ENCODE measurements at regions of chr5 and their contacts with region 1.

Region 1: GRCh38 chr5:112529525-112529924 is 110.4 kb upstream of the EPB41L4A start:
- DNase-seq: no peak
- ATAC-seq: no peak
- H3K4me3 ChIP-seq: no peak overlapping the region
- H3K27ac ChIP-seq: no peak overlapping the region
- H3K4me1 ChIP-seq: no peaks in the 10 kb centered on the region
- H3K27me3 ChIP-seq: no peaks in the 10 kb centered on the region
- CTCF ChIP-seq: peak in 8 of 9 donors; percentile 10 to 57 (median 48)

Region 2: DNA sequence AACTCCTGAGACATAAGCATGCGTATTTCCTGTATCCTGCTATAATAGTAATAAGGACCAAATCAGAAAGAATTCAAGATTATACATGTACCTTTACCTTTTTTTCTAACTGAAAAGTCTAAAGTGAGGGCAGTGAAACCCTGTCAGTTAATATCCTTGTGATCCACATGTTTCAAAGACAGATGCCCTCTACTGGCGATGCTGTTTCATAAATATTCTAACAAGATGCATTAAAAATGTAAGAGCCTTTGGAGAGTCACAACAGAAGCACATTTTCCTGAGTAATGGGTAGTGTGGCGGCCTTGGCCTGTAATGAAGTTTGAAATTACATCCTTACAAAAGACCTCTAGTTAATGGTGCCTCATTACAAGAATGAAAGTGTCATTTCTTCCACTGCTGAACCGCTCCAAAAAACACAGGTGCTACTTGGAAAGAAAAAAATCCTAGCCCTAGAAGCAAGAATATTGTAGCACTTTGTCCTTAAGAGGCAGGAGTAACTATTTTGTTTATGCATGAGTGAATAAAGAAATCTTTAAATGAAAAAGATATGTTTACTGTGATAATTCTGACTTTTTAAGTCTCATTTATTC is 343.0 kb before region 1 on chr5:
- intact Hi-C with region 1: loop called in 3 of 10 experiments (anchors 5 to 10 kb)
- DNase-seq: no peak
- ATAC-seq: peak in 1 of 8 donors; percentile 56
- H3K4me3 ChIP-seq: no peak overlapping the region
- H3K27ac ChIP-seq: no peak overlapping the region
- H3K4me1 ChIP-seq: no peaks in the 10 kb centered on the region
- H3K27me3 ChIP-seq: no peaks in the 10 kb centered on the region
- CTCF ChIP-seq: peak; percentile 16 to 66 (median 55)

Region 3: DNA sequence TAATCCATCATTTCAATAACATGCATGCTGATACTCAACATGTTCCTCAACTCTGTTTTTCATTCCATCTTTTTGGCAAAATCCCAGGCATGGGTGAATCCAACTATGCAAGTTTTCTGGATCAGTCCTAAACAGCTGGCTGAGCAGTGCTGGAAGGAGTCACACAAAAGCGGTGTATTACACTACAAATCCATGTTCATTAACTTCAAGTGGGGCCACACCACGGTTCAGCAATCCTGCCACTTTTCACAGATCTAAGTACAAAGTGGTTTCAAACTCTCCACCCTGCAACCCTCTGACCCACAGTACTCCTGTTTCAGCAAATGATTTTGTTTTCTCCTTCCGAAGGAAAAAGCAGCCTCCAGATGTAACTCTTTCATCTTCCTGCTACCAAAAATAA is 332.9 kb before region 1 on chr5:
- intact Hi-C with region 1: loop called in 1 of 10 experiments (anchors 10 kb)
- DNase-seq: no peak
- ATAC-seq: no peak
- H3K4me3 ChIP-seq: no peak overlapping the region
- H3K27ac ChIP-seq: no peak overlapping the region
- H3K4me1 ChIP-seq: peaks cover 0 to 6% (median 0%) of the 10 kb centered on the region in 9 donors
- H3K27me3 ChIP-seq: no peaks in the 10 kb centered on the region
- CTCF ChIP-seq: no peak

Region 4: DNA sequence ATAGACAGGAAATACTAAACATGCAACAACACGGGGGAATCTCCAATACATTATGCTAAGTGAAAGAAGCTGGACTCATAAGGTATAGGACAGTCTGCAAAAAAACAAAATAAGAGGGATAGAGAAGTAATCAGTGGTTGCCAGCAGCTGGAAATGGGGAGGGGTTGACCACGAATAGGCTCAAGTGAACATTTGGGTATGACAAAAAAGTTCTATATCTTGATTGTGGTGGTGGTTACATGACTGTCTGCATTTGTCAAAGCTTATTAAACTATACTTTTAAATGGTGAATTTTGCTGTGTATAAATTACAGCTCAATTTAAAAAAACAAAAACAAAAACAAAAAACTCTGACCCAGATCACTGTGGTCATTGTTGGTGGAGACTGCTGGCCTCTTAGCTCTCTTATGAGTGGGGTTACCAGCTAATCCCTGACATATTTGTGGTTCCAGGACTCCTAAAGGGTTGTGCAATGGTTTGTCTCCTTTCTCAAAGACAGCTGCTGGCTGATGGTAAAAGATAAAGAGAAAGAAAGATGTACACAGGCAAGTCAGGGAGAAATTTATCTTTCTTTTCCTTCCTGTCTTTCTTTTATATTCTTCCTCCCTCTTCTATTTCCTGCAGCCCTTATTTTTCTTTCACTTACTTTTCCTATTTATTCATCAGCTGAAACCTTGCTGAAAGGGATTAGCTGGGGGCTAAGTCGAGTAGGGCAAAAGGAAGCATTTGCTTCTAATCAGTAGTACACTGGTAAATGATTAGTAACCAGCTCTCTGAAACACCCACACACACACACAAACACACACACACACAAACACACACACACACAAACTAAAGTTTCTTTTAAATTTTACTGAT is 165.6 kb after region 1 on chr5:
- intact Hi-C with region 1: no loop called
- DNase-seq: no peak
- ATAC-seq: no peak
- H3K4me3 ChIP-seq: no peak overlapping the region
- H3K27ac ChIP-seq: no peak overlapping the region
- H3K4me1 ChIP-seq: no peaks in the 10 kb centered on the region
- H3K27me3 ChIP-seq: no peaks in the 10 kb centered on the region
- CTCF ChIP-seq: no peak

Measured in heart right ventricle (tissue), 16 donors.